PC-9 (cell line): ENCODE measurements at regions of chr1 and their contacts with region 1.

Region 1: DNA sequence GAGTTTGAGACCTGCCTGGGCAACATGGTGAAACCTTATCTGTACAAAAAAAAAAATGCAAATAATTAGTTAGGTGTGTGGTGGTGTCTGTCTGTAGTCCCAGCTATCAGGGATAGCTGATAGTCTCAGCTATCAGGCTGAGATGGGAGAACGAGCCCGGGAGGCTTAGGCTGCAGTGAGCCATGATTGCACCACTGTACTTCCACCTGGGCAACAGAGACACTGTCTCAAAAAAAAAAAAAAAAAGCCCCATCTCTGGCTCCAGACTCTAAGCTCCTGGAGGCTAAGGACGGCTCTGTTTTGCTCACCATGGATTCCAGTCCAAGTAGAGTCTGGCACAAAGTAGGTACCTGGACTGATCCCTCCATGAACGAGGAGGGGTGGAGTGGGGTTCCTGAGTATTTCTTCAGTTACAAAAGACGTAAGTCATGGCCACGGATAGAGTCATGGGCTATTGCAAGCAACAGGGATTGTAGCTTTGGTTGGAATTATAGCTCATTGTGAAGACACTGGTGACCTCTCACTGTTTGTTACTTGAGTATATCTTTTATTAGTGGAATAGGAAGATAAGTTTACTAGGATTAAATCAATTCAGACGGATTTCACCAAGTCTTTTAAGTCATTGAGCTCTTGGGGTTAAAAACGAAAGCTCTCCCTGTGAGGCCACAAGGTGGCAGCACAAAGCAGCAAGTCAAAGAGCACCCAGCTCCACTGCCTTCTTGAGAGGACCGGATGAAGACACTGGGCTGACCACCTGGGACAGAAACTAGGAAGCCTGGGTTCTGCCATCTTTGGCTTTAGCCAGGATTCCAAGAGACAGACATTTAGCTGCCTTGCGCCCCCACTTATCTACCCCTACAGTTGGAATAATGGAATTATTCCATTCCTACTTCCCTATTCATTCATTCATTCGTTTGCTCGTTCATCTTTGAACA is 35.6 kb upstream of the TMEM61 start:
- DNase-seq: peak; percentile 72 to 79
- H3K4me3 ChIP-seq: peak overlapping the region; percentile 10; the same call in 1 of the 2 replicates
- H3K27ac ChIP-seq: 0 out of 2 replicates have a peak overlapping the region, but pooled peaks have one; percentile 21
- H3K4me1 ChIP-seq: peaks cover 14% of the 10 kb centered on the region
- H3K27me3 ChIP-seq: no peaks in the 10 kb centered on the region
- CTCF ChIP-seq: peak; percentile 90

Region 2: DNA sequence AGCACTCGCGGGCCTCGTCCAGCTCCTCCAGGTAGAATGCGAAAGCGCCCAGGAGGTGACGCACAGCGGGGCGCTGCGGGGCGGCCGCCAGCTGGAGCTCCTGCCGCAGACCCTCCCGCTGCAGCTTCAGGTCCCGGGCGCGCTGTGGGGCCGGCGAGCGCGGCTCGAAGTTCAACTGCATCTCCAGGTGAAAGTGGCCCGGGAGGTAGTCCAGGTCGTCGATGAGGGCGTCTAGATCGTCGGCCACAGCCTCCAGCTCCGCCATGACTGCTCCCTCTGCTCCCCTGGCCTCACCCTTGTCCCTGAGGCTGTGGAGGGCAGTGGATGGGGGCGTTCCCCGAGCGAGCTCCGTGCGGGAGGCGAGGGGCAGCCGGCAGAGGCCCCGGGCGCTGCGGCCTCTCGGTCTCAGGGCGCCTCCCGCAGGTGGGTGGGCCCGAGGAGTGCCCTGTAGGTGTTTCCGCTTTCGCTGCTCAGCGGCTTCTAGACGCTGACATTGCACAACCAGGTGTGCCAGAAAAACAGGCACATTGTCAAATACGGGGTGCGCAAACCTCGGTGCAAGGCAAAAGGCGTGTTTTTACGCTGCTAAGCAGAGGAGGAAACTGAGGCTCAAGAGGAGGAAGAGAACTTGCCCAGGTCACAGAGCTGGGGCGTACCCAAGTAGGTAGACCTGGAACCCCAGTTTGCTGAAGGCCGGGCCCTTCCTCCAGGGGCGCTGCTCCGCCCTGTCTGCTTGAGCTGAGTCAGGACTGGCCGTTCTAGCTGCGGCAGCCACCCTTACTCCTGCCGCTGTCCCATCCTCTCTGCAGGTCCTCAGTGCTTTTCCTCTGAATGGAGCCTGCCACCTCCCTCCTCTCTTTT is 143.7 kb before region 1 on chr1 and contains the start of gene TTC22:
- CTCF ChIA-PET with region 1: no interaction called
- POLR2A ChIA-PET with region 1: no interaction called
- intact Hi-C with region 1: loop called (anchors 5 kb)
- DNase-seq: peak; percentile 72 to 87
- H3K4me3 ChIP-seq: peak within 1 kb of the TSS; percentile 86
- H3K27ac ChIP-seq: peak within 1 kb of the TSS; percentile 76
- H3K4me1 ChIP-seq: peaks cover 79% of the 10 kb centered on the region
- H3K27me3 ChIP-seq: no peaks in the 10 kb centered on the region
- CTCF ChIP-seq: peak; percentile 72
- total RNA-seq, gene TTC22: 24.1 and 26.3 TPM in 2 replicates

Region 3: GRCh38 chr1:54833121-54833520 is 111.8 kb before region 1 on chr1:
- CTCF ChIA-PET with region 1: no interaction called
- POLR2A ChIA-PET with region 1: no interaction called
- intact Hi-C with region 1: no loop called
- DNase-seq: no peak
- H3K4me3 ChIP-seq: no peak overlapping the region
- H3K27ac ChIP-seq: no peak overlapping the region
- H3K4me1 ChIP-seq: no peaks in the 10 kb centered on the region
- H3K27me3 ChIP-seq: no peaks in the 10 kb centered on the region
- CTCF ChIP-seq: no peak

Region 4: DNA sequence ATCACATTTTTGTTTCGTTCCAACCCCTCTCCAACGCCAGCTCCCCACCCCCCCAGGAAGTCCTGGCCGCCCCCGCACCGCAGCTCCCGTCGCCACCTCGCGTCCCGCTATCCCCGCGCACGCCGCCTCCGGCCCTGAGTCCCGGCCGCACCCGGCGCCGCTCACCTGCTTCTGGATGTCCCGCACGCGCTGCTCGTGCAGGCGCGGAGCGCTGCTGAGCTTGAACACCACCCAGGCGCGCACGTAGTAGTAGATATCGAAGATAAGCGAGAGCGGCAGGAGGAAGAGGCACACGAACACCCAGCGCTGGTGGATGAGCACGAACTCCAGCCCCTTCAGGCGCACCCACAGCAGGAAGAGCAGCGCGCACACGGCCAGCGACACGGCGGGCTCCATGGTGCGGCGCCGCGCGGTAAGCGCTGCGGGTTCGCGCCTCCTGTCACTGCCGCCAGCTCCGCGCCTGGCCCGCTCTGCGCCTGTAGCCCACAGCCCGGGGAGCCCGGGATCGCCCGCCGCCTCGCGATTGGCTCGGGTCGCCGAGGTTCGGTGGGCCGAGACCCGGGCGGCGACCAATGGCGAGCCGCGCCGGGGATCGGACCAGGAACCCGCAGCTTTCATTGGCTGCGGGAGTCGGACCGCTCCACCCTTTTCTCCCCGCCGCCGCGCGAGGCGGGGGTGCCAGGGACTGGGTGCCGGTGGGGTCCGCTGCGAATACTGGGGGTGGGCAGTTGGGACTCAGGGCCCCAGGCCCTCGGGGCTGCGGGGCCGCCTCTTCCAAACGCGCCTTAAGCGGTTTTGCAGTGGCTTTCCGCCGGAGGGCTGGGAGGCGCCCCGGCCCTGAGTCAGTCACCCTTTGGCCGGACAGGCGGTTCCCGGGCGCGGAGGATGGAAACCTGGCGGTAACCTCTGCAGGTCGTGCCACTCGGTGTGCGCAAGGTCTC is 57.9 kb before region 1 on chr1 and contains the start of gene DHCR24:
- CTCF ChIA-PET with region 1: interaction called, 8 read pairs
- POLR2A ChIA-PET with region 1: interaction called, 15 read pairs
- intact Hi-C with region 1: loop called (anchors 1 kb)
- DNase-seq: peak; percentile 69 to 90
- H3K4me3 ChIP-seq: peak within 1 kb of the TSS; percentile 96
- H3K27ac ChIP-seq: peak within 1 kb of the TSS; percentile 79
- H3K4me1 ChIP-seq: peaks cover 61% of the 10 kb centered on the region
- H3K27me3 ChIP-seq: no peaks in the 10 kb centered on the region
- CTCF ChIP-seq: no peak
- total RNA-seq, gene DHCR24: 195 and 369 TPM in 2 replicates

Region 5: GRCh38 chr1:54989968-54990810 is 45.3 kb after region 1 on chr1:
- CTCF ChIA-PET with region 1: interaction called, 13 read pairs
- POLR2A ChIA-PET with region 1: no interaction called
- intact Hi-C with region 1: loop called (anchors 1 kb)
- DNase-seq: no peak
- H3K4me3 ChIP-seq: no peak overlapping the region
- H3K27ac ChIP-seq: no peak overlapping the region
- H3K4me1 ChIP-seq: peaks cover 30% of the 10 kb centered on the region
- H3K27me3 ChIP-seq: no peaks in the 10 kb centered on the region
- CTCF ChIP-seq: no peak

Region 6: GRCh38 chr1:55021965-55022546 is 77.2 kb after region 1 on chr1:
- CTCF ChIA-PET with region 1: interaction called, 31 read pairs
- POLR2A ChIA-PET with region 1: interaction called, 3 read pairs
- intact Hi-C with region 1: loop called (anchors 1 kb)
- DNase-seq: peak; percentile 82 to 92
- H3K4me3 ChIP-seq: no peak overlapping the region
- H3K27ac ChIP-seq: no peak overlapping the region
- H3K4me1 ChIP-seq: no peaks in the 10 kb centered on the region
- H3K27me3 ChIP-seq: no peaks in the 10 kb centered on the region
- CTCF ChIP-seq: peak; percentile 93